ENCODE measurements at regions of chr10 and their contacts with region 1.

Region 1: GRCh38 chr10:73096449-73097304 is at the start of gene P4HA1:
- DNase-seq: peak; percentile 99
- CTCF ChIP-seq: peak; percentile 83

Region 2: DNA sequence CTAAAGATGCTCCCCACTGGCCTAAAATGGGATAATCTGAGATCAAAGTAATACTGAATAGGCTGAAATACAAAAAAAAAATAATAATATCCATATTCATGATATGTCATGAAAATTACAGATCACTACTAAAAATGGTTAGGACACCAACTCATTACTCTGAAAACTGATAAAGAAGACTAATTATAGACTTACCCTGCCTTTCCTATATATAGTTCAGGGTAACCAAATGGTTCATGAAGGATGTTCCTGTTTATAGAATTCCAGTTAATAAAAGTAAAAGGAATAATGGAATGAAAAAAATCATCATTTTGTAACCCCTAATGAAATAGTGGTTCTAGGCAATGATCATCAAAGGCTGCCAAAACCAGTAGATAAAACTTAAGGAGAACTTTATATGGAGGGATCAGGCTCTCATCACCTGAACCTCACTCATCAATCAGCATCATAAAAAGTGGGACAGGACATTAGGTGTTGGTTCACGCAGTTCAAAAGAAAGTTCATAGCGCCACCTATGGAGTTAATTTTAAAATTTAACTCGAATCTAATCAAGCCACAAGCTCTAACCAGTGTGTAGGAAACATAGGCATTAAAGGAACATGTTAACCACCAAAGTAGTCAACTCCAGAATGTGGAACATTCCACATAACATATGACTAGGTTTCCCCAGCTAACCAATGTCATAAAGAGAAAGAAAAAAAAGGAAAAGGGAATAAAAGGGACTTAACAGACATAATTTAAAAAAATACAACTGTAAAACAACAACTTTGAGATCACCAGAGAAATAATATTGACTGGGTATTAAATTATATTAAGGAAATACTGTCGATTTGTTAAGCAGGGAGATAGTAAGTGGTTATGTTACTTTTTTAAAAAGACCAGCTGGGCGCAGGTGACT is 35.7 kb before region 1 on chr10:
- CTCF ChIA-PET with region 1: interaction called, 15 read pairs
- POLR2A ChIA-PET with region 1: interaction called, 11 read pairs
- DNase-seq: peak; percentile 22
- CTCF ChIP-seq: peak; percentile 20

Region 3: GRCh38 chr10:73083221-73083620 is 13.5 kb before region 1 on chr10:
- CTCF ChIA-PET with region 1: interaction called, 14 read pairs
- POLR2A ChIA-PET with region 1: interaction called, 19 read pairs
- DNase-seq: no peak
- CTCF ChIP-seq: no peak

Region 4: GRCh38 chr10:73117976-73118743 is 21.5 kb after region 1 on chr10:
- CTCF ChIA-PET with region 1: interaction called, 7 read pairs
- POLR2A ChIA-PET with region 1: interaction called, 10 read pairs
- DNase-seq: peak; percentile 71
- CTCF ChIP-seq: no peak

Region 5: DNA sequence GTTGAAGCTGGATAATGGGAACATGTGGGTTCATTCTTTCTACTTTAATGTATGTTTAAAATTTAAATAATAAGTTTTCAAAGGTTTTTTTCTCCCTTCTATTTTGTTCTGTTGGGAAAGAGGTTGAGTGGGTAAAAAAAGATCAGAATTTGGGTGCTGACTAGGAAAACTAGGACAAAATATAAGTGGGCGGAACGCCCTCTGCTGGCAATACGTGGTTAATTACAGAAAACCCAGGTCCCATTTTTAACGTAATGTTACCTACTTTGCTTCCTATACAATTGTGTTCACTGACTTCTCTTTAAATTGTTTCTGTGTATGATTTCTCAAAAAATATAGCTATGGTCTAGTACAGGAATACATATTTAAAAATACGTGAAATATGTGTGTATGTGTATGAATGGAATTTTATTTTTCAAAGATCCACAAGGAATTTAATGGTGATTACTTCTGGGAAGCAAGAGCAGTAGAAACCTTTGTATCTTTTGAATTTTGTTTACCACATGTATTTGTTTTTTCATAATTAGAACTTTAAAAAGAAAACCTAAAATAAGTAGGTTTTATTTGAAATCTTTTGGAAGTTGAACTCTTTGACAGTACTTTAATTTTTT is 62.5 kb after region 1 on chr10:
- CTCF ChIA-PET with region 1: interaction called, 101 read pairs
- POLR2A ChIA-PET with region 1: interaction called, 8 read pairs
- DNase-seq: peak; percentile 60
- CTCF ChIP-seq: peak; percentile 66

Region 6: GRCh38 chr10:73229567-73229966 is 132.9 kb after region 1 on chr10:
- CTCF ChIA-PET with region 1: no interaction called
- POLR2A ChIA-PET with region 1: no interaction called
- DNase-seq: no peak
- CTCF ChIP-seq: no peak